Right ventricle myocardium inferior (tissue), 1 donor: ENCODE measurements at regions of chr20 and their contacts with region 1.

Region 1: GRCh38 chr20:35828434-35828833 is 56.6 kb downstream of the PHF20 start:
- DNase-seq: peak; percentile 81
- ATAC-seq: peak; percentile 92

Region 2: GRCh38 chr20:35454881-35455609 is 373.4 kb before region 1 on chr20 and contains the start of gene CEP250:
- intact Hi-C with region 1: loop called (anchors 5 kb)
- DNase-seq: peak; percentile 97
- ATAC-seq: peak; percentile 99
- total RNA-seq, gene CEP250: 15.9 TPM